Caco-2 (cell line): ENCODE measurements at regions of chr20 and their contacts with region 1.

Region 1: GRCh38 chr20:34876162-34877001 is at the start of gene ACSS2:
- DNase-seq: peak; percentile 100
- H3K4me3 ChIP-seq: peak within 1 kb of the TSS; percentile 71
- H3K4me3 Mint-ChIP-seq: peak within 1 kb of the TSS; percentile 86
- H3K27ac Mint-ChIP-seq: peak within 1 kb of the TSS; percentile 84
- H3K4me1 ChIP-seq: peaks cover 33% of the 10 kb centered on the region
- H3K4me1 Mint-ChIP-seq: peaks cover 50% of the 10 kb centered on the region
- H3K27me3 ChIP-seq: no peaks in the 10 kb centered on the region
- H3K27me3 Mint-ChIP-seq: no peaks in the 10 kb centered on the region
- CTCF ChIP-seq: peak in 1 of 2 experiments; percentile 0
- total RNA-seq, gene ACSS2: 64.5 and 76.0 TPM in 2 replicates

Region 2: GRCh38 chr20:34262488-34263288 is 613.7 kb before region 1 on chr20:
- CTCF ChIA-PET with region 1: no interaction called
- POLR2A ChIA-PET with region 1: no interaction called
- intact Hi-C with region 1: no loop called
- DNase-seq: peak in 1 of 2 experiments; percentile 48
- H3K4me3 ChIP-seq: no peak overlapping the region
- H3K4me3 Mint-ChIP-seq: no peak overlapping the region
- H3K27ac Mint-ChIP-seq: no peak overlapping the region
- H3K4me1 ChIP-seq: no peaks in the 10 kb centered on the region
- H3K4me1 Mint-ChIP-seq: no peaks in the 10 kb centered on the region
- H3K27me3 ChIP-seq: no peaks in the 10 kb centered on the region
- H3K27me3 Mint-ChIP-seq: no peaks in the 10 kb centered on the region
- CTCF ChIP-seq: no peak

Region 3: GRCh38 chr20:34834459-34834893 is 41.9 kb before region 1 on chr20:
- CTCF ChIA-PET with region 1: interaction called, 4 read pairs
- POLR2A ChIA-PET with region 1: no interaction called
- intact Hi-C with region 1: loop called (anchors 2 kb)
- DNase-seq: peak in 1 of 2 experiments; percentile 40
- H3K4me3 ChIP-seq: no peak overlapping the region
- H3K4me3 Mint-ChIP-seq: no peak overlapping the region
- H3K27ac Mint-ChIP-seq: no peak overlapping the region
- H3K4me1 ChIP-seq: peaks cover 7% of the 10 kb centered on the region; the same call in 1 of the 2 replicates
- H3K4me1 Mint-ChIP-seq: no peaks in the 10 kb centered on the region
- H3K27me3 ChIP-seq: no peaks in the 10 kb centered on the region
- H3K27me3 Mint-ChIP-seq: peaks cover 9% of the 10 kb centered on the region
- CTCF ChIP-seq: peak; percentile 43 to 75

Region 4: GRCh38 chr20:34907616-34908469 is 31.5 kb after region 1 on chr20:
- CTCF ChIA-PET with region 1: interaction called, 3 read pairs
- POLR2A ChIA-PET with region 1: interaction called, 5 read pairs
- intact Hi-C with region 1: loop called (anchors 2 kb)
- DNase-seq: no peak
- H3K4me3 ChIP-seq: no peak overlapping the region
- H3K4me3 Mint-ChIP-seq: no peak overlapping the region
- H3K27ac Mint-ChIP-seq: no peak overlapping the region
- H3K4me1 ChIP-seq: peaks cover 14% of the 10 kb centered on the region
- H3K4me1 Mint-ChIP-seq: peaks cover 15% of the 10 kb centered on the region
- H3K27me3 ChIP-seq: no peaks in the 10 kb centered on the region
- H3K27me3 Mint-ChIP-seq: no peaks in the 10 kb centered on the region
- CTCF ChIP-seq: no peak

Region 5: DNA sequence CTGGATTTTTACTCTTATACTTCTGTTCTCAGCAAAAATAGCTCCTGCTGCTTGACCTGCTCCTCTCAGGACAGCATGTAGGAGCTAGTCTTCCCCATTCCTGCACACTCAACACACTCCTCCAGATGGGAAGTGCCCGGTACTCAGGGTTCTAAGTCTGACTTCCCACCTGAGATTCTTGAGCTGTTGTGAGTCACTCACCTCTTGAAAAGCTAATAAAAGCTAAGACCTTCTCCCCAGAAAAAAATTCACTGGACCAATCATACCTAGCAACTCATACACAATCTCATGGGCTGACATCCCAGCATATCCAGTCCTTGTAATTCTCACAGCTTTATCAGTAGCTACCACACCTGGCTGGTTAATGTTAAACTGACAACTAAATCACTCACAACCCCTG is 162.8 kb after region 1 on chr20:
- CTCF ChIA-PET with region 1: interaction called, 11 read pairs
- POLR2A ChIA-PET with region 1: interaction called, 13 read pairs
- intact Hi-C with region 1: no loop called
- DNase-seq: peak; percentile 89 to 95
- H3K4me3 ChIP-seq: no peak overlapping the region
- H3K4me3 Mint-ChIP-seq: peak overlapping the region; percentile 33
- H3K27ac Mint-ChIP-seq: peak overlapping the region; percentile 38
- H3K4me1 ChIP-seq: peaks cover 43% of the 10 kb centered on the region
- H3K4me1 Mint-ChIP-seq: peaks cover 46% of the 10 kb centered on the region
- H3K27me3 ChIP-seq: no peaks in the 10 kb centered on the region
- H3K27me3 Mint-ChIP-seq: no peaks in the 10 kb centered on the region
- CTCF ChIP-seq: no peak

Region 6: DNA sequence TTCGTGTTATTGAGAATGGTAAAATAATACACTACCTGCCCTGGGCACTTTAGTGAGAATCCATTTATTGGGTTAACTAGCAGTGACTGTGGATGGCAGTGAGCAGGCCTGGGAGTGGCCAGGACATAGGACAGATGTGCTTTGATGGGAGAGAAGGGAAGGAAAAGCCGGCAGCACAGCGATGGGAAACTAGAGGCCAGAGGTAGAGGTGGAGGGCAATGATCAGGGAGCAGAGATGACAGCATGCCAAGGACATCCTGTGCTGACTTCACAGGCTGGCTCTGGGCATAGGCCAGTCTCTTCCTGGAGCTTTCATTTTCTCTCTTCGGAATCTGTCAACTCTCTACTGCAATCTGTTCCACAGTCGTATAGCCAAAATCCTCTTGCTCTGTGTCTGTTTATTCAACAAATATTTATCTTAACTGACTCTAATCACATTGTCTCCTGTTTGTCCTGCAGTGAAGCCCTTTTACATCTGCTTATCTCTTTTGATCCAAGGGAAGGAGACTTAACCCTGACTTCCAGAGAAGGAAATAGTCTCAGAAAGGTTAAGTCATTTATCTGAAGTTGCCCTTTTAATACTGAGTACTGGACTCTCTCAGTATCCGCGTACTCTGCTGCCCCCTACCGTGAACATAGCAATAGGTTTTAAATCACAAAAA is 331.7 kb after region 1 on chr20:
- CTCF ChIA-PET with region 1: no interaction called
- POLR2A ChIA-PET with region 1: no interaction called
- intact Hi-C with region 1: loop called (anchors 1 kb)
- DNase-seq: peak; percentile 93 to 96
- H3K4me3 ChIP-seq: no peak overlapping the region; the same call in 1 of the 2 replicates
- H3K4me3 Mint-ChIP-seq: no peak overlapping the region
- H3K27ac Mint-ChIP-seq: no peak overlapping the region
- H3K4me1 ChIP-seq: peaks cover 21% of the 10 kb centered on the region; the same call in 1 of the 2 replicates
- H3K4me1 Mint-ChIP-seq: peaks cover 5% of the 10 kb centered on the region
- H3K27me3 ChIP-seq: no peaks in the 10 kb centered on the region
- H3K27me3 Mint-ChIP-seq: no peaks in the 10 kb centered on the region
- CTCF ChIP-seq: peak; percentile 92 to 98

Region 7: GRCh38 chr20:35277531-35278395 is 401.4 kb after region 1 on chr20 and contains the start of gene MMP24OS:
- CTCF ChIA-PET with region 1: no interaction called
- POLR2A ChIA-PET with region 1: interaction called, 10 read pairs
- intact Hi-C with region 1: no loop called
- DNase-seq: peak; percentile 91
- H3K4me3 ChIP-seq: peak within 1 kb of the TSS; percentile 58
- H3K4me3 Mint-ChIP-seq: peak within 1 kb of the TSS; percentile 72
- H3K27ac Mint-ChIP-seq: peak within 1 kb of the TSS; percentile 74
- H3K4me1 ChIP-seq: peaks cover 4% of the 10 kb centered on the region; the same call in 1 of the 2 replicates
- H3K4me1 Mint-ChIP-seq: no peaks in the 10 kb centered on the region
- H3K27me3 ChIP-seq: no peaks in the 10 kb centered on the region
- H3K27me3 Mint-ChIP-seq: no peaks in the 10 kb centered on the region
- CTCF ChIP-seq: peak; percentile 11 to 48
- total RNA-seq, gene MMP24OS: 38.8 and 42.3 TPM in 2 replicates

Region 8: GRCh38 chr20:35954200-35954906 is 1078.0 kb after region 1 on chr20 and contains the start of gene SCAND1:
- CTCF ChIA-PET with region 1: no interaction called
- POLR2A ChIA-PET with region 1: no interaction called
- intact Hi-C with region 1: loop called (anchors 5 kb)
- DNase-seq: peak; percentile 100
- H3K4me3 ChIP-seq: peak within 1 kb of the TSS; percentile 86
- H3K4me3 Mint-ChIP-seq: peak within 1 kb of the TSS; percentile 88
- H3K27ac Mint-ChIP-seq: peak within 1 kb of the TSS; percentile 96
- H3K4me1 ChIP-seq: peaks cover 22% of the 10 kb centered on the region
- H3K4me1 Mint-ChIP-seq: peaks cover 9% of the 10 kb centered on the region
- H3K27me3 ChIP-seq: no peaks in the 10 kb centered on the region
- H3K27me3 Mint-ChIP-seq: no peaks in the 10 kb centered on the region
- CTCF ChIP-seq: peak; percentile 99 to 100
- total RNA-seq, gene SCAND1: 125 and 129 TPM in 2 replicates